Activated CD4-positive, alpha-beta T cell treated with anti-CD3 and anti-CD28 coated beads, Interleukin-2, amount 10 ng/mL, durations not matched to agents 7 days and 5 days (primary cell): ENCODE measurements at regions of chr1 and their contacts with region 1.

Region 1: DNA sequence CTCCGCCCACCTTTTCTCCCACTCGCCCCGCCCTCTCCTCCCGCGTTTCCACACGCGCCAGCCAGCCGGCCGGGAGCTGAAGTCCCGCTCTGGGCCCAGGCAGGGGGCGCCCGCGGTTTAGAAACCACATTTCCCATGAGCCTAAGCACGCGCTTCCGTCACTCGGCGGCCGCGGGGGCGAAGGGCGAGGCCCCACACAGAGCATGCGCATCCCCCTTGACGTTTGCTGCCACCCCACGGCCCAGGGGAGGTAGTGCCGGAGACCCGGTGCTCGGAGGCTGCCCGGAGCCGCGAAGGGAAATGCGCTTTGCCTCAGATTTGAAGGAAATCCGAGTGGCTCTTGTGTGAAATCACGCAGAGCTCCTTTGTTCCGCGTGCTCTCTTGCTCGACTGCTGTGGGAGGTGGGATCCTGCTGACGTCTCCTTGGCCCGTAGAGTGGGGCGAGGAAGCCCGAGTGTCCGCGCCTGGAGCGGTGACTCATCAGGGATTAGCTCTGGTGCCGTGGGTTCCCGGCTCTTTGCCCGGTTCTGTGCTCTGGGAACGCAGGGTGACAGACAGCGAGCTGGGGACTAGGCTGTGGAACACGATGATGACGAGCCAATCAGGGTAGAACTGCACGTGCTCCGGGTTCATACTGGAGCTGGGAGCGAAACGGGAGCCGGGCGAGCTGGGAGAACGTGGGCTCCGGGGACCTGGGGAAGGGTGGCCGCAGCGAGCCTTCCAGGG is 407 bp upstream of the B3GALNT2 start:
- DNase-seq: peak; percentile 98
- H3K4me3 Mint-ChIP-seq: peak overlapping the region; percentile 91
- H3K27ac Mint-ChIP-seq: peak overlapping the region; percentile 97
- H3K4me1 Mint-ChIP-seq: peaks cover 33% of the 10 kb centered on the region
- H3K27me3 Mint-ChIP-seq: peaks cover 5% of the 10 kb centered on the region

Region 2: DNA sequence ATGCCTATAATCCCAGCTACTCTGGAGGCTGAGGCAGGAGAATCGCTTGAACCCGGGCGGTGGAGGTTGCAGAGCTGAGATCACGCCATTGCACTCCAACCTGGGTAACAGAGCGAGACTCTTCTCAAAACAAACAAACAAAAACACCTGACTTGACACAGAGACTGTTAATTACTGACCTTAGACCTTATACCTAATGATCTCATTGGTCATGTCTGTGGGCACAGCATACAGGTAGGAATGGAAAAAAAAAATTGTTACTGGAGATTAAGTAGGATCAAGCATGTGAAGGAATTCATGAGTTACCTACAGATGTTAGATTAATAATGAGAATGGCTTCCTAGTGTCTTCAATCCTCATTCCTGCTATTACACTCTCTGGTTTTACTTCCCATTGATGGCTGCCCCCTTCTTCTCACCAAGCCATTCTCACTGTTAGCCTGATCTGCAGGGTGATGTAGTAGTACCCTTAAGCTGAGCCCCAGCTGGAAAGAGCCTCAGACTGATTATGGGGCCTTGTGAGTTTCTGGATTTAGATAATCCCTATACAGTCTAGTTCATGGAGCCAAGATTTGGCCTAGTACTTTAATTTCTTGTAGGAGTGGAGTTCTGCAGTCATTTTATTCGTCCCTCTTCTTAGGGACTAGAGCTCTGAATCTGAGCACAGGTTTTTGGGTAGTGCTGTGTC is 128.6 kb before region 1 on chr1:
- CTCF ChIA-PET with region 1: no interaction called
- POLR2A ChIA-PET with region 1: no interaction called
- DNase-seq: no peak
- H3K4me3 Mint-ChIP-seq: no peak overlapping the region
- H3K27ac Mint-ChIP-seq: no peak overlapping the region
- H3K4me1 Mint-ChIP-seq: peaks cover 9% of the 10 kb centered on the region
- H3K27me3 Mint-ChIP-seq: no peaks in the 10 kb centered on the region

Region 3: DNA sequence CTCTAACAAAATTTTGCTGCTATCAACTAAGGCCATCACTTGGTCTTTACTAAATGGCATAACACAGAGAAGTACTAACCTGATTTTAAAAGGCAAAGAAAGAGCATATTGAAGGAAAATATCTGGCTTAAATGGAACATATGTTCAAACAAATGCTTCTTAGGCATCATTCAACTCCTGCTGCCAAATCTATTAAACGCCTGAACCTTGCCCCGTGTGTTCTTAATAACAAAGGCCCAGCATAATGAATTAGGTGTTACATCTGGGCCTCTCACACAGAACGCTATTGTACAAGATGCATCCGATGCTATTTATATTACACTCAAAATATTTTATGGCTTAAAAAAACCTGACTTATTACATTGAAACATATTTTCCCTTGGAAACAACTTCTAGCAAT is 48.8 kb before region 1 on chr1:
- CTCF ChIA-PET with region 1: no interaction called
- POLR2A ChIA-PET with region 1: no interaction called
- DNase-seq: no peak
- H3K4me3 Mint-ChIP-seq: no peak overlapping the region
- H3K27ac Mint-ChIP-seq: no peak overlapping the region
- H3K4me1 Mint-ChIP-seq: peaks cover 1% of the 10 kb centered on the region
- H3K27me3 Mint-ChIP-seq: no peaks in the 10 kb centered on the region

Region 4: DNA sequence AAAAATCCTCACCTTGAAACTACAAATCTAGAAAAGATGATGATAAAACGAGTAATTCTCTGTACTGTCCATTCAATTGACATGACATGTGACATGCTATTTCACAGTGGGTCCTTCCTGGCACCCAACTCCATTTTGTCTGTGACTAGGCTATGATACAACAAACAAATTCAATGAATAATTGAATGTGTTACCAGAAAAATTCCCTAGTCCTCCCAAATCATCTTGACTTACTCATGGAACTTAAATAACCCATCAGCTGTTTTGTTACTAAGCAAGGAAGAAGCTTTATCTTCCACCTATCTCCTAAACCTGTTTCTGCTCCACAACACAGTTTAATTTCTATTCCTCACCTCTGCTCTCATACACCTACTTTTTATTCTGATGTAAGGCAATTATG is 30.9 kb before region 1 on chr1:
- CTCF ChIA-PET with region 1: interaction called, 13 read pairs
- POLR2A ChIA-PET with region 1: no interaction called
- DNase-seq: no peak
- H3K4me3 Mint-ChIP-seq: no peak overlapping the region
- H3K27ac Mint-ChIP-seq: no peak overlapping the region
- H3K4me1 Mint-ChIP-seq: no peaks in the 10 kb centered on the region
- H3K27me3 Mint-ChIP-seq: no peaks in the 10 kb centered on the region

Region 5: DNA sequence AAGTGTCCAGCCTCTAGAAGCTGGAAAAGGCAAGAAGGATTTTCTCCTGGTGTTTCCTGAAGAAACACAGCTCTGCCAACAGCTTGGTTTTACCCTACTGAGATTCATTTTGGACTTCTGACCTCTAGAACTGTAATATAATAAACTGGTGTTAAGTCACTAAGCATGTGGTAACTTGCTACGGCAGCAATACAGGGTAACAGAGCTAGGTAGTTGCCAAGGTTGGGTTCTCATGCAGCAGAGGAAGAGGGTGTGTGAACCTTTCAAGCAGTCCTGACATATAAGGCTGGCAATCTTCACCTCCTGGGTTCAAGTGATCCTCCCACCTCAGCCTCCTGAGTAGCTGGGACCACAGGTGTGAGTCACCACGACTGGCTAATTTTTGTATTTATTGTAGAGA is 108.9 kb after region 1 on chr1:
- CTCF ChIA-PET with region 1: no interaction called
- POLR2A ChIA-PET with region 1: no interaction called
- DNase-seq: no peak
- H3K4me3 Mint-ChIP-seq: no peak overlapping the region
- H3K27ac Mint-ChIP-seq: no peak overlapping the region
- H3K4me1 Mint-ChIP-seq: no peaks in the 10 kb centered on the region
- H3K27me3 Mint-ChIP-seq: peaks cover 6% of the 10 kb centered on the region